Activated CD4-positive, alpha-beta T cell treated with anti-CD3 and anti-CD28 coated beads for 36 hours (primary cell): ENCODE measurements at regions of chr1 and their contacts with region 1.

Region 1: DNA sequence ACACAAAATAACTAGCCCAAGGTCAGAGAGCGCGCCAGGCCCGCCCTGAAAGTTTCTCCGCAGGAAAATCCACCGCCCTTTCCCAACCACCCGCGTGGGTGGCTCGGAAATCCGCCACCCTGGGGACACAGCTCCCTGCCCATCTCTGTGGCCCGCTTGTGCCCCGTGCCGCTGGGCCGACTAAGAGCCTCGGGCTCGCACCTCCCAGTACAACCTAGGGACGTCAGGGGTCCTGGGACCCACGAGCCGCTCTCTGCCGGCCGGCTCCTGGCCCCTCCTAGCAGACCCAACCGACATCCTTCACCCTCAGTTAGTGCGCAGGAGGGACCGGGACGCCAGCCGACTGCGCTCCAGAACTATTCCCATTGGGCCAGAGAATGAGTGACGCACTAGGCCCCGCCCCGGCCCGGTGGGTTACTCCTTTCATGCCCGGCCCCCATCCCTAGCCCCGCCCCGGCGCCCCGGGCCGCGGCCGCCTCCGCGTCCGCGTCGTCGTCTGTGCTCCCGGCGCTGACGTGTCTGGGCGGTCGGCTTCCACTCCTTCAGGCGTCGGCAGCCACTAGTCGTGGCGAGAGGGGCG is 395 bp upstream of the UAP1 start:
- DNase-seq: peak; percentile 99
- ATAC-seq: peak; percentile 98
- H3K4me3 Mint-ChIP-seq: peak overlapping the region; percentile 79
- H3K27ac Mint-ChIP-seq: peak overlapping the region; percentile 94
- H3K4me1 Mint-ChIP-seq: peaks cover 35% of the 10 kb centered on the region
- H3K27me3 Mint-ChIP-seq: no peaks in the 10 kb centered on the region

Region 2: GRCh38 chr1:162069328-162070093 is 491.6 kb before region 1 on chr1 and contains the start of gene NOS1AP:
- CTCF ChIA-PET with region 1: no interaction called
- POLR2A ChIA-PET with region 1: no interaction called
- intact Hi-C with region 1: loop called in 1 of 2 experiments (anchors 1 kb)
- DNase-seq: peak; percentile 91
- ATAC-seq: peak; percentile 99
- H3K4me3 Mint-ChIP-seq: peak within 1 kb of the TSS; percentile 71
- H3K27ac Mint-ChIP-seq: no peak within 1 kb of the TSS
- H3K4me1 Mint-ChIP-seq: no peaks in the 10 kb centered on the region
- H3K27me3 Mint-ChIP-seq: peaks cover 46% of the 10 kb centered on the region
- total RNA-seq, gene NOS1AP: 0.34 to 0.35 TPM